ENCODE measurements at regions of chr21 and their contacts with region 1.

Region 1: GRCh38 chr21:39204134-39204533 is 20.9 kb upstream of the PSMG1 start:
- DNase-seq: no peak
- ATAC-seq: no peak

Region 2: DNA sequence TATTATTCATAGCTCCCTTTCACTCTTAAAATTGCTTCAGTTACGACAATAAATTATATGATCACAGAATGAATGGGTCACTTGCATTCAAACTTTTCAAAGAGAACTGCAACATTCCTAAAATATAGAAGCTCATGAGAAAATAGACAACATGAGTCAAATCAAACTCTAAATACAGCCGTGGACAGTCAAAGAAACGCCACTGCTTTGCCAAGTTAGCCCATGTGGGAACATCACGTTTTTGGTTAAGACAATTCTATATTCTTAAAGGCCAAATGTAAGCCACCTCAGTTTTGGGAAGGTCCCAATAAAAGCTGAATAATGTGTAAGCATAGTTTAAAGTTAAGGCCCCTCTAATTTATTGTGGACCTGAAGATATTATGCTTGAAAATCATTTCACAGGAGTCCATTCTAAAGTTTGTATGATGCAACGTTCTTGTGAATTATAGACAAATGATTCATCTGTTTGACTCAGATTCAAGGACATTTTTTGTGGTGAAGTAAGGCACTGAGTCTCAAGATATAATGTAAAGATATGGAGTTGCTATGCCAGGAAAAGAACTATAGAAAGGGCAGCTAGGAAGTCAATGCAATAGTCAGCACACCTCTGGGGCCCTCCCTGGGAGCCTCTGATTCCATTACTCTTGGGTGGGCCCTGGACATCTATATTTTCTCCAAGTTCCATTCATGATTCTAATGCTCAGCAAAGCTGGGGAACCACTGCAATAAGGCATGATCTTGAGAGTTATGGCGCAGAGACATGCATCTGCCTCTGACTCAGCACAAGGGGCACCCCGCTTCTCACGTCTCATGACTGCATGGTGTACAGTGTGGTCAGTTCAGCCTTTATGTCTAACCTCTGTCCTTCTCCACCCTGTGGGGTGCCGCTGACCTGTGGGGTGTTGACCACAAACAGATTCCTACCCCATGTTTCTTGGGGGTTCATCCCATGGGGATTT is 364.5 kb before region 1 on chr21:
- intact Hi-C with region 1: no loop called
- DNase-seq: no peak
- ATAC-seq: no peak

Region 3: DNA sequence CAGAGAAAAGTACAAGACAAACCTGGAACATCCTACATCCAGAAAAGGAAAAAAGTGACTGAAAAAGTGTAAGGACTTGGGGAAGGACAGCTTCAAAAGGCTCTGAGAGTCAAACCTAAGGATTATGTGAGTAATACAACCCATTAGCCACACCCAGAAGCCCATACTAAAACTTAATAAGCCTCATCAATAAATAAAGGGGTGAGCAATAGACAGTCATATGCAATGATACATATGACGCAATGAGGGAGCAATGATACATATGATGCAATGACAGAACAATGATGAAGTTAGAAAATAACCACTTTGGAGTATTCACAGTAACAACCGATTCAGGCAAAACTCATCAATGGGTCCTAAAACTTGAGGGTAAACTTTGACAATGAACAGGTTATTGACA is 59.2 kb after region 1 on chr21:
- intact Hi-C with region 1: loop called (anchors 10 kb)
- DNase-seq: no peak
- ATAC-seq: no peak

Measured in Right ventricle myocardium superior (tissue), 1 donor.